ENCODE measurements at regions of chr4 and their contacts with region 1.

Region 1: DNA sequence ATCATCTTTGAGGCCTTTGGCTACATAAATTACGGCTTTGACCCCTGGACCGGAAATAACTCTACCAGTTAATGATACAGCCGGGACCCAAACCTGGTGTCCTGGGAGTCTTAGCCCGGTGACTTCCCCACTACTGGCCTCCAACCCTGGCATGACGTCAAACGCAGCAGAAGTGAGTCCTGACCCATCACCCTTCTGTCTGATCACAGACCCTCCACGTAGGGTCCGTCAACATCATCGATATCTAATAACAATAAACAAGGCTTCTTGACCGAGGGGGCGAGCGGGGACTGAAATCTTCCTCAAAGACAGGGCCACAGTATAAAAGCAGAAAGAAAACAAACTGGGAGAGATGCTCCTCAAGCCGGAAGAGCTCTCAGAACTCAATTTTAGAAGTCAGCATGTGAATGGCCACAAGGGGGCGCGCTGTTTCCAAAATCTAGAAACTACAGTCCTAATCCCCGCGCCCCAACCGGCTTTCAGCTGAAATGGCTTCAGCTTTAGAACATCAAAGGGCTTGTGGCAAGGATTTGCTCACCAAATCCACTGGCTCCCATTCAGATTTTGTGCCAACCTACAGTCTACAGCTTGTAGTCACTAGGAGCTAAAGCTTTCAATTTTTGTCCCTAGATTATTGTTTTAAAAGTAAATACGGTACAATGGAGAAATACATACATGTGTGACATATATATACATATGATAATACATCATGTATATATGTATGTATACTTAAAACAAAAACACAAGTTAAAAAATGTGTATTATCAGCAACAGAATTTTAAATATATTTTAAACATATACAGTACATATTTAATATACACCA is 46.4 kb upstream of the ENPP6 start:
- DNase-seq: peak; percentile 99
- H3K4me3 Mint-ChIP-seq: no peak overlapping the region
- H3K27ac Mint-ChIP-seq: no peak overlapping the region
- H3K4me1 Mint-ChIP-seq: peaks cover 47% of the 10 kb centered on the region
- H3K27me3 Mint-ChIP-seq: no peaks in the 10 kb centered on the region

Region 2: DNA sequence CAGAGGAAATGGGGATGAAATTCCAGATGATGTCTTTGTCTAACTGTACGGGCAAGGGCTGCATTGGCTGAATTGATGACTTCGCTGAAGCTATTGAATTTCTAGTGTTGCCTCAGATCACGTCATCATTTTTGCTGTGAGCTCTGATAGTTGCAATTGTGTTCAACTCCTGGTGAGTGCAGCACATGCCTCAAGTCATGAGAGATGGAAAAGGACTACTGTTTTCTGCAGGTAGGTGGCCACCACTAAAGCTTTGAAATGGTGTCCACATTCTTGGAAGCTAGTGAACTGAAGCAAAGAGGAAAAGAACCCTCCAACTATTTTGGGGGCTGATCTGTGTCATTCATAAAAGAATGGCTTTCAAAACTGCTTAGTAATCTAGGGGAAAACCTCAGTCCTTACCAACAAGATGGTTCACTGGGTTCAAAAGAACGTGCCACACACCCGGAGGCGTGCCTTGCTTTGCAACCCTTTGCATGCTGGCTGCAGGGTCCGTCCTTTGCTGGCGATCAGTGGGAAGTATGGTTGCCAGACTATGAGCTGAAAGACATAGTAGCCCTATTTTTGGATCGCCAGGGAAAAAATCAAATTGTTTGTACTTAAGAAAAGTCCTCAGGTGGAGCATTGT is 447.1 kb before region 1 on chr4:
- CTCF ChIA-PET with region 1: no interaction called
- intact Hi-C with region 1: no loop called
- DNase-seq: no peak
- H3K4me3 Mint-ChIP-seq: no peak overlapping the region
- H3K27ac Mint-ChIP-seq: no peak overlapping the region
- H3K4me1 Mint-ChIP-seq: no peaks in the 10 kb centered on the region
- H3K27me3 Mint-ChIP-seq: peaks cover 9% of the 10 kb centered on the region

Region 3: DNA sequence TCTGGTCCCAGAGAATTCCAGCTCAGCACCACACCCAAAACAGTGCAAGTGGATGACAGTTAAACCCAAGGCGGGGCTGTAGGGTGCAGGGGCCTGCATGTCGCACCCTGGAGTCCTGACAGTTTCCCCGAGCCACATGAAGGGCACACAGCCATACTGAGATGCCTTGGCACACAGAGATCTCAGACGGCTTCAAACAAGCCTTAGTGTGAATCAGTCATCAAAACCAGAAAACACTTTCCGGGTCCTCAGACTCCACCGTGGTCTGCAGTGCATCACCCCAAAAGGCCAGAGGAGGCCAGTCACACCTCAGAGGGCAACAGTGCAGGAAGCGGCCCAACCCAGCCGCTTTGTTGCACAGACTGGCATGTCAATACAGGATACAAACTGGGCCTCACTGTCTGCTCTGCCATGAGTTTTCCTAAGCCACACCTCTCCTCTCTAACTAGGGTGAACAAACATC is 18.2 kb after region 1 on chr4:
- CTCF ChIA-PET with region 1: interaction called, 131 read pairs
- intact Hi-C with region 1: loop called (anchors 1 kb)
- DNase-seq: peak; percentile 82
- H3K4me3 Mint-ChIP-seq: no peak overlapping the region
- H3K27ac Mint-ChIP-seq: peak overlapping the region; percentile 85
- H3K4me1 Mint-ChIP-seq: peaks cover 64% of the 10 kb centered on the region
- H3K27me3 Mint-ChIP-seq: peaks cover 4% of the 10 kb centered on the region

Region 4: GRCh38 chr4:184329659-184330400 is 65.7 kb after region 1 on chr4:
- CTCF ChIA-PET with region 1: interaction called, 7 read pairs
- intact Hi-C with region 1: loop called (anchors 1 kb)
- DNase-seq: no peak
- H3K4me3 Mint-ChIP-seq: no peak overlapping the region
- H3K27ac Mint-ChIP-seq: no peak overlapping the region
- H3K4me1 Mint-ChIP-seq: peaks cover 27% of the 10 kb centered on the region
- H3K27me3 Mint-ChIP-seq: no peaks in the 10 kb centered on the region

Region 5: GRCh38 chr4:184474263-184475095 is 210.4 kb after region 1 on chr4 and contains the start of gene IRF2:
- CTCF ChIA-PET with region 1: interaction called, 6 read pairs
- intact Hi-C with region 1: loop called (anchors 1 kb)
- DNase-seq: peak; percentile 99
- H3K4me3 Mint-ChIP-seq: peak within 1 kb of the TSS; percentile 98
- H3K27ac Mint-ChIP-seq: peak within 1 kb of the TSS; percentile 100
- H3K4me1 Mint-ChIP-seq: peaks cover 49% of the 10 kb centered on the region
- H3K27me3 Mint-ChIP-seq: no peaks in the 10 kb centered on the region
- total RNA-seq, gene IRF2: 37.3 to 38.3 TPM

Region 6: GRCh38 chr4:184575306-184575705 is 311.2 kb after region 1 on chr4:
- CTCF ChIA-PET with region 1: no interaction called
- intact Hi-C with region 1: loop called (anchors 1 kb)
- DNase-seq: no peak
- H3K4me3 Mint-ChIP-seq: no peak overlapping the region
- H3K27ac Mint-ChIP-seq: no peak overlapping the region
- H3K4me1 Mint-ChIP-seq: peaks cover 13% of the 10 kb centered on the region
- H3K27me3 Mint-ChIP-seq: no peaks in the 10 kb centered on the region

Region 7: DNA sequence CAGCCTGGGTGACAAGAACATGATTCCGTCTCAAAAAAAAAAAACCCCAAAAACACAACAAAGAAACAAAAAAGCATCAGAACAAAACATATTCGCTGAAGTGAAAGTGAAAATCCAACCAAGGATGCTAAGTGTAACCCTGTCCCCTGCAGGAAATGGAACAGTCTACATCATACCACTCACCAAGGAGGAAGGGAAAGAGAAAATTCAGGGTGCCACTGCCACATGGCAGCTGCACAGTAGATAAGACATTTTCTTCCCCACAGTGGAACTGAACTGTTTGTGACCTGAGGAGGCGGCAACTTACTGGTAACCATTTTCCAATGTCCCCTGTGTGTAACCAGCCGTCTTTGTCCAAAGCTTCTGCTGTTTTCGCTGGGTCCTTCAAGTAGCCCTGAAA is 498.0 kb after region 1 on chr4:
- CTCF ChIA-PET with region 1: no interaction called
- intact Hi-C with region 1: loop called (anchors 1 kb)
- DNase-seq: peak; percentile 56
- H3K4me3 Mint-ChIP-seq: peak overlapping the region; percentile 24
- H3K27ac Mint-ChIP-seq: peak overlapping the region; percentile 83
- H3K4me1 Mint-ChIP-seq: peaks cover 22% of the 10 kb centered on the region
- H3K27me3 Mint-ChIP-seq: no peaks in the 10 kb centered on the region

Region 8: DNA sequence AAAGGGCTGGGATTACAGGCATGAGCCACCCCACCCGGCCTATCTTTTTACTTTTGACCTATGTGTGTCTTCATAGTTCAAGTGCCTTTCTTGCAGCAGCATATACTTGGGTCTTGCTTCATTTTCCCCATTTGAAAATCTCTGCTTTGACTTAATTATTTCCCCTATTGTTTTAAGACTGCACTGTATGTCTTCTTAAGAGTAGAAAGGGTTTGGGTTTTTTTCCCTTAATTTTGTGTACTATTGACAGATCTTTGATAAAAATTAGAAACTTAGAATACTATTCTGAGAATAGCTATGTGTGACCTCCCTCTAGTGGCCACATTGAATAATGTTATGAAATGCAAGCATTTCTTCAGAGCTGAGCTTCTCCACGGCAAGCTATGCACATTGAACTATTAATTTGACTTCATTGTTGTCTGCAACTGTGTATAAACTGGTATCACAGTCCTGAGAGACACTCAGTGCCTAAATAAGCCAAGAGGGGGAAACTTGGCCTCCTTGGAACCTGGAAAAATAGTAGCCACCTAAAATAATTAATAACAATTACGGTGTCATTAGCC is 870.3 kb after region 1 on chr4:
- CTCF ChIA-PET with region 1: no interaction called
- intact Hi-C with region 1: loop called (anchors 10 kb)
- DNase-seq: no peak
- H3K4me3 Mint-ChIP-seq: no peak overlapping the region
- H3K27ac Mint-ChIP-seq: no peak overlapping the region
- H3K4me1 Mint-ChIP-seq: no peaks in the 10 kb centered on the region
- H3K27me3 Mint-ChIP-seq: peaks cover 21% of the 10 kb centered on the region

Measured in activated naive CD4-positive, alpha-beta T cell treated with anti-CD3 and anti-CD28 coated beads for 36 hours (primary cell).